HEK293 (cell line): ENCODE measurements at regions of chr19 and their contacts with region 1.

Region 1: DNA sequence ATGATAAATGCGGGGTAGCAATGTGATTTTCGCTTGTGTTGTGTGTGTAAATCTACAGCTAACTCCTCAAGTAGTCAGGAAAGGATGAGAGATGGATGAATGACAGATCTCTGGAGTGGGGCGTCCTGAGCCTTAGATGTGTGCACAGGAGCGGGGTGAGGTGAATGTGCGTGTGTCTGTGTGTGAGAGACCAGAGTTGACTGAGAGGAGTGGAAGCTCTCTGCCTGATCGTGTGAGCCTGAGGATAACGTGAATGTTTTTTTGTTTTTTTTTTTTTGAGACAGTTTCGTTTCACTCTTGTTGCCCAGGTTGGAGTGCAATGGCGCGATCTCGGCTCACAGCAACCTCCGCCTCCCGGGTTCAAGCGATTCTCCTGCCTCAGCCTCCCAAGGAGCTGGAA is 805 bp downstream of the ZNF461 start:
- H3K4me3 ChIP-seq: peak overlapping the region; percentile 55
- H3K27ac ChIP-seq: peak overlapping the region; percentile 79; the same call in 1 of the 2 replicates
- H3K4me1 ChIP-seq: peaks cover 3% of the 10 kb centered on the region; the same call in 1 of the 2 replicates
- CTCF ChIP-seq: no peak

Region 2: GRCh38 chr19:36547001-36547732 is 118.7 kb before region 1 on chr19:
- CTCF ChIA-PET with region 1: no interaction called
- POLR2A ChIA-PET with region 1: no interaction called
- H3K4me3 ChIP-seq: no peak overlapping the region
- H3K27ac ChIP-seq: no peak overlapping the region
- H3K4me1 ChIP-seq: no peaks in the 10 kb centered on the region
- CTCF ChIP-seq: no peak

Region 3: GRCh38 chr19:36605101-36605876 is 60.5 kb before region 1 on chr19 and contains the start of gene ZNF382:
- CTCF ChIA-PET with region 1: no interaction called
- POLR2A ChIA-PET with region 1: interaction called, 10 read pairs
- H3K4me3 ChIP-seq: peak within 1 kb of the TSS; percentile 57
- H3K27ac ChIP-seq: peak within 1 kb of the TSS; percentile 98
- H3K4me1 ChIP-seq: peaks cover 6% of the 10 kb centered on the region
- CTCF ChIP-seq: no peak; the same call in none of the 2 replicates

Region 4: GRCh38 chr19:36627057-36627456 is 38.8 kb before region 1 on chr19:
- CTCF ChIA-PET with region 1: no interaction called
- POLR2A ChIA-PET with region 1: no interaction called
- H3K4me3 ChIP-seq: no peak overlapping the region
- H3K27ac ChIP-seq: no peak overlapping the region
- H3K4me1 ChIP-seq: no peaks in the 10 kb centered on the region
- CTCF ChIP-seq: no peak